ENCODE measurements at regions of chr2 and their contacts with region 1.

Region 1: DNA sequence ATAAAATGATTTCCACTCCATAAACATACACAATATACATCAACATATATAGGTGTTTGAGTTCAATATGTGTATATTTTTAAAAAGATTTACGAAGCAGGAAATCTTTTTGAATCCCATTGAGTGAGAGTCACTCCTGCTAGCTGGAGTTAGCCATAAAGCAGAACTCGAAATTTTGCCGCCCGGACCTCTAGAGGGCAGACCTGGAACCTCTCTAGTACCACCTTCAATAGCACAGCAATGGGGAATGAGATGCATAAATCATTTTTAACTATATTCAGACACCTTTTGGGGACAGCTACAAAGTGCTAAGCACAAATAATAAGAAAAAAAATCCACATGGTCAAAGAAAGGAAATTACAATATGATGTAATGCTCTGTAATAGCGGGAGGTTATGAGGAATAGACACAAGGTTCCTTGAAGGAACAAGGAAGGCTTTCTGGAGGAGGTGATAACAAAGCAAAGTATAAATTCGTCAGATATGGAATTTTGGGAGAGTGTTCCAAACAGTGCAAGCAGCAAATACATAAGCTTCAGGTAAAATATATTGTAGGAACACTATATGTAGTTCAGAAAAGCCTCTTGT is 533.4 kb downstream of the ERBB4 start:
- DNase-seq: peak; percentile 83
- H3K4me3 ChIP-seq: no peak overlapping the region
- H3K27ac ChIP-seq: no peak overlapping the region
- H3K4me1 ChIP-seq: peaks cover 44% of the 10 kb centered on the region
- H3K27me3 ChIP-seq: no peaks in the 10 kb centered on the region
- CTCF ChIP-seq: peak; percentile 87

Region 2: DNA sequence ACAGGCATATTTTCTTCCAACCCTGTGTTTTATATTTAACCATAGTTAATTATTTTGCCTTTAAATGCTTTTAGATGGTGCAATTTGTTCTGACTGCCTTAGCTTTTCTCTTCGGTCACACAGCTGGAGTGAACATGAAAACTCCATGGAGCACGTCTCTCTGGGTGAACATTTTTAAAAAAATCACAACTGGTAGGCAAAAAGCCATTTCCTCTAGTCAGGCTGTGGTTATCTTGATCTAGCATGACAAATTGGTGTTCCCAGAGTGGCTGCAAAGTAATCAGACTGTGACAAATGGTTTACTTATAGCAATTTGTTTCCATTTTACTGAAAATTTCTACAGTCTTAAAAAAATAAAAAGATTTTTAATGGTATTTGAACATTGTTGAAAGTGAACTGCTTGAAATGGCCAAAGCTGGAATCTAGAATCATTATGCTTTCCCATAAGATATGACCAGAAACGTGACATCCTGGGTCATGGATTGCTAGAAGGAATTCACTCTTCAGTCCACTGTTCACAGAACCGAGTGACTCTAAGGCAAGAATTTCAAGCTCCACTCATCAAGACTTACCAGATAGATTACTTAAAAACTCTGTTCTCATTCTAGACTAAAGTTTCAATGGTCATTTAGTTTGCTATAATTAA is 745.2 kb before region 1 on chr2:
- CTCF ChIA-PET with region 1: no interaction called
- POLR2A ChIA-PET with region 1: no interaction called
- intact Hi-C with region 1: loop called (anchors 2 kb)
- DNase-seq: peak; percentile 96
- H3K4me3 ChIP-seq: no peak overlapping the region
- H3K27ac ChIP-seq: peak overlapping the region; percentile 100
- H3K4me1 ChIP-seq: peaks cover 21% of the 10 kb centered on the region
- H3K27me3 ChIP-seq: no peaks in the 10 kb centered on the region
- CTCF ChIP-seq: no peak

Region 3: DNA sequence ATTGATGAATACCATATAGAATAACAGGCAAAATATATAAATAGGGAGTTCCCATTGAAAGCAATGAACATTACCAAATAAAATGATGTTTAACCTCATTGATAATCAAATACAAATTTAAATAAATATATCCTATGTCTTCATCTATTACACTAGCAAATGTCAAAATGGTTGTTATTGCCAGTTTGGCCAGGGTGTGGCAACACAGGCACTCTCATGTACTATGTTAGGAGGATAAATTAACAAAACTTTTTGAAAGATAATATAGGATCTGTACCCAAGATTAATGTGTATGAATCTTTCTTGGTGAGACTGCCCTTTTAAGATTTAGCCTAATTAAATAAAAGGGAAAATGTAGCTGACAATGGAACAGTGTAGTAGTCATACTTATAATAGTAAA is 125.9 kb before region 1 on chr2:
- CTCF ChIA-PET with region 1: no interaction called
- POLR2A ChIA-PET with region 1: no interaction called
- intact Hi-C with region 1: loop called (anchors 5 kb)
- DNase-seq: peak; percentile 63
- H3K4me3 ChIP-seq: no peak overlapping the region
- H3K27ac ChIP-seq: no peak overlapping the region
- H3K4me1 ChIP-seq: peaks cover 9% of the 10 kb centered on the region
- H3K27me3 ChIP-seq: no peaks in the 10 kb centered on the region
- CTCF ChIP-seq: peak; percentile 60

Region 4: GRCh38 chr2:212147921-212148513 is 142.8 kb after region 1 on chr2:
- CTCF ChIA-PET with region 1: no interaction called
- POLR2A ChIA-PET with region 1: no interaction called
- intact Hi-C with region 1: loop called (anchors 10 kb)
- DNase-seq: peak; percentile 56
- H3K4me3 ChIP-seq: no peak overlapping the region
- H3K27ac ChIP-seq: no peak overlapping the region
- H3K4me1 ChIP-seq: no peaks in the 10 kb centered on the region
- H3K27me3 ChIP-seq: no peaks in the 10 kb centered on the region
- CTCF ChIP-seq: peak; percentile 70

Region 5: GRCh38 chr2:212237350-212238095 is 232.3 kb after region 1 on chr2:
- CTCF ChIA-PET with region 1: no interaction called
- POLR2A ChIA-PET with region 1: no interaction called
- intact Hi-C with region 1: no loop called
- DNase-seq: no peak
- H3K4me3 ChIP-seq: no peak overlapping the region
- H3K27ac ChIP-seq: no peak overlapping the region
- H3K4me1 ChIP-seq: no peaks in the 10 kb centered on the region
- H3K27me3 ChIP-seq: no peaks in the 10 kb centered on the region
- CTCF ChIP-seq: no peak

Region 6: GRCh38 chr2:212249451-212249850 is 244.3 kb after region 1 on chr2:
- CTCF ChIA-PET with region 1: no interaction called
- POLR2A ChIA-PET with region 1: no interaction called
- intact Hi-C with region 1: loop called (anchors 10 kb)
- DNase-seq: peak; percentile 51
- H3K4me3 ChIP-seq: no peak overlapping the region
- H3K27ac ChIP-seq: no peak overlapping the region
- H3K4me1 ChIP-seq: peaks cover 38% of the 10 kb centered on the region
- H3K27me3 ChIP-seq: no peaks in the 10 kb centered on the region
- CTCF ChIP-seq: peak; percentile 66

Measured in A673 (cell line).